CD8-positive, alpha-beta T cell (primary cell): ENCODE measurements at regions of chr6 and their contacts with region 1.

Region 1: GRCh38 chr6:41027799-41028628 is 11.0 kb downstream of the UNC5CL start:
- DNase-seq: peak; percentile 39 to 87 (median 73)
- ATAC-seq: peak; percentile 87
- H3K4me3 ChIP-seq: peak overlapping the region; percentile 65 to 67
- H3K4me3 Mint-ChIP-seq: peak overlapping the region; percentile 84
- H3K27ac ChIP-seq: peak overlapping the region; percentile 35 to 76
- H3K27ac Mint-ChIP-seq: peak overlapping the region; percentile 74
- H3K4me1 ChIP-seq: peaks cover 19% of the 10 kb centered on the region
- H3K4me1 Mint-ChIP-seq: peaks cover 21% of the 10 kb centered on the region
- H3K27me3 ChIP-seq: no peaks in the 10 kb centered on the region
- H3K27me3 Mint-ChIP-seq: no peaks in the 10 kb centered on the region
- CTCF ChIP-seq: peak; percentile 99

Region 2: DNA sequence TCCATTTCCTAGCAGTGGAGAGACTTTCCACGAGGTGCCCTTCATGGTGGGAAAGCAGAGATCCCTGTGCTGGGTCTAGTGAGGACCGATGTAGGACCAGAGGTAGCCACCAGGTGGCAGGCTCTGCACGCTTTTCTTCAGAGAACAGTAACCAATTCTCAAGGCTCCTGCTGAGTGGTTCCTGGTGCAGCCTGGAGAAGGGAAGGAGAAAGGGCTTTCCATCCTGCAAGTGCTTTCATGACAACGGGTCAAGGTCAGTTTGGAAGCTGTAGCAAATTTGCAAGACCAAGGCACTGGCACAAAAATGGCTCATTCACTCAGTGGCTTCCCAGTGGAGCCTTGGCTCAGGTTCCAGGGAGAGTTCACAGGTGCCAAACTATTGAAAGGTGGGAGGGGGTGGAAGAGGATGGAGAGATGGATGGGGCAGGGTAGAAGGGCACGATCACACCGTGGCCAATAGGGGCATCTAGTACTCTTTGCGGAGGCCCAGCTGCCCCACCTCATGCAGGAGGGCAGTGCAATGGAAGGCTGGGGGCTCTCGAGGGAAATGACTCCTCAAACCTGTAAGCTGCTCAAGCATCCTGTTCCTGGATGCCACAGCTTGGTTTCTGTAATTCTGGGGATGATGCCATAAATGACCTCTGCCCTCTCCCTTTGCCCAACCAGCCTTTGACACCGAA is 1680.0 kb before region 1 on chr6:
- CTCF ChIA-PET with region 1: interaction called, 3 read pairs
- POLR2A ChIA-PET with region 1: no interaction called
- intact Hi-C with region 1: loop called in 1 of 2 experiments (anchors 5 kb)
- DNase-seq: peak in 8 of 9 experiments; percentile 5 to 66 (median 48)
- ATAC-seq: peak; percentile 48
- H3K4me3 ChIP-seq: no peak overlapping the region
- H3K4me3 Mint-ChIP-seq: no peak overlapping the region
- H3K27ac ChIP-seq: no peak overlapping the region
- H3K27ac Mint-ChIP-seq: no peak overlapping the region
- H3K4me1 ChIP-seq: no peaks in the 10 kb centered on the region
- H3K4me1 Mint-ChIP-seq: no peaks in the 10 kb centered on the region
- H3K27me3 ChIP-seq: no peaks in the 10 kb centered on the region
- H3K27me3 Mint-ChIP-seq: peaks cover 4% of the 10 kb centered on the region
- CTCF ChIP-seq: peak; percentile 75

Region 3: DNA sequence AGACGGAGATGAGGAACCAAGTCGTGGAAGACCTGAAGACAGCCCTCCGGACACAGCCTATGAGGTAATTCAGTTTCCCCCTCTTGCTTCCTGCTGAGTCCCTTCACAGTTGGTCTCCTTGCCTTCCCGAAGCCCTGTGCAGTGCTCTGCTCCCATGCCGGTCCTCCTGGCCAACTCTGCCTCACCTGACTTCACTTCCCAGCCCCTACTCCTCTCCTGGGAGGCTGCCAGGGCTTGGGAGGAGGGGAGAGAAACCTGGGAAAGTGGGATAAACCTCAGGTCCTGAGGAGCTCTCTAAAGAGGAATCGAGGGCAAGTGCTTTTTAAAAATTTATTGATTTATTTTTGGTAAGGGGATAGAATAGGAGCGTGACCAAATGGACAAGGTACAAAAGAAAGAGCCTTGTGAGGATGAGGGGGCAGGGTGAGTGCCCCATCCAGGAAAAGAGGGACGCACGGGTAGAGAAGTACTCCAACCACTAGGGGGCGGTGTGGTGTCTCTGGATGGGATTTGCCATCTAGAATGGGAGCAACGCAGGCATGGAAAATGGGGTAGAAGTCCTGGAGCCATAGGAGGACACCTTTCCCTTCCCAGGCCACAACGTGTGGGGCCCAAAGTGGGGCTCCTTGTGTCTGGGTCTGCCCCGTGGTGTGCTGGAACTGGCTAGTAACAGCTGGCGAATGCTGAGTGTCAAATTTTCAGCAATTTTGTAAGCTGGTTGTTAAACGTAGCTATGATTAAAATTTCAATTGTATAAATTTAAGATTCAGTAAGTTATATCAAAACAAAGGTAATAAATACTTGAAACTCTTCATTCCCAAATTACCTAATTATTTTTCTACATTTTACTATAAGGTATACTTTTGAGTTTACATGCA is 1162.8 kb before region 1 on chr6:
- CTCF ChIA-PET with region 1: no interaction called
- POLR2A ChIA-PET with region 1: no interaction called
- intact Hi-C with region 1: loop called in 1 of 2 experiments (anchors 5 kb)
- DNase-seq: peak in 8 of 9 experiments; percentile 32 to 68 (median 52)
- ATAC-seq: no peak
- H3K4me3 ChIP-seq: no peak overlapping the region
- H3K4me3 Mint-ChIP-seq: no peak overlapping the region
- H3K27ac ChIP-seq: no peak overlapping the region
- H3K27ac Mint-ChIP-seq: no peak overlapping the region
- H3K4me1 ChIP-seq: no peaks in the 10 kb centered on the region
- H3K4me1 Mint-ChIP-seq: no peaks in the 10 kb centered on the region
- H3K27me3 ChIP-seq: no peaks in the 10 kb centered on the region
- H3K27me3 Mint-ChIP-seq: peaks cover 15% of the 10 kb centered on the region
- CTCF ChIP-seq: peak; percentile 74

Region 4: GRCh38 chr6:40999569-40999968 is 28.4 kb before region 1 on chr6:
- CTCF ChIA-PET with region 1: interaction called, 17 read pairs
- POLR2A ChIA-PET with region 1: interaction called, 3 read pairs
- intact Hi-C with region 1: no loop called
- DNase-seq: peak in 2 of 9 experiments; percentile 25 to 44
- ATAC-seq: no peak
- H3K4me3 ChIP-seq: no peak overlapping the region
- H3K4me3 Mint-ChIP-seq: no peak overlapping the region
- H3K27ac ChIP-seq: no peak overlapping the region
- H3K27ac Mint-ChIP-seq: no peak overlapping the region
- H3K4me1 ChIP-seq: no peaks in the 10 kb centered on the region
- H3K4me1 Mint-ChIP-seq: no peaks in the 10 kb centered on the region
- H3K27me3 ChIP-seq: no peaks in the 10 kb centered on the region
- H3K27me3 Mint-ChIP-seq: peaks cover 21% of the 10 kb centered on the region
- CTCF ChIP-seq: no peak

Region 5: DNA sequence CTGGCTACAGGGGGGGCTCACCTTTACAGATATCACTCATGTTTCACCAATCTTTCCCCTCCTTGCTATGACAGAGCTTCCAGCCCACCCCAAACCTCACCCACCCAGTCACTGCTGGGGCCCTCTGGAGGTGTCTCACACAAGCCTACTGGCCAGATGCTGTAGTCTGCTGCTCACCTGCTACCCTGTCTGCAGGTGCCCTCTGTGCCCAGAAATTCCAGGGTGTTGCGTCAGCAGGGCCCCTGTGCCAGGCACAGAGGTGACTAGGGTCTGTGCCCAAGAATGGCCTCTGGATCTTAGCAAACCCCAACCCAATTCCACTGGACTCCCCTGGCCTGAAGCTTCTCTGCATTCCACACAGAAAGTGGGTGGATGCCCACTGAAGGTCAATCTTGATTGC is 10.4 kb before region 1 on chr6:
- CTCF ChIA-PET with region 1: interaction called, 18 read pairs
- POLR2A ChIA-PET with region 1: interaction called, 3 read pairs
- intact Hi-C with region 1: no loop called
- DNase-seq: no peak
- ATAC-seq: no peak
- H3K4me3 ChIP-seq: no peak overlapping the region
- H3K4me3 Mint-ChIP-seq: no peak overlapping the region
- H3K27ac ChIP-seq: no peak overlapping the region
- H3K27ac Mint-ChIP-seq: no peak overlapping the region
- H3K4me1 ChIP-seq: no peaks in the 10 kb centered on the region
- H3K4me1 Mint-ChIP-seq: no peaks in the 10 kb centered on the region
- H3K27me3 ChIP-seq: no peaks in the 10 kb centered on the region
- H3K27me3 Mint-ChIP-seq: peaks cover 2% of the 10 kb centered on the region
- CTCF ChIP-seq: no peak

Region 6: DNA sequence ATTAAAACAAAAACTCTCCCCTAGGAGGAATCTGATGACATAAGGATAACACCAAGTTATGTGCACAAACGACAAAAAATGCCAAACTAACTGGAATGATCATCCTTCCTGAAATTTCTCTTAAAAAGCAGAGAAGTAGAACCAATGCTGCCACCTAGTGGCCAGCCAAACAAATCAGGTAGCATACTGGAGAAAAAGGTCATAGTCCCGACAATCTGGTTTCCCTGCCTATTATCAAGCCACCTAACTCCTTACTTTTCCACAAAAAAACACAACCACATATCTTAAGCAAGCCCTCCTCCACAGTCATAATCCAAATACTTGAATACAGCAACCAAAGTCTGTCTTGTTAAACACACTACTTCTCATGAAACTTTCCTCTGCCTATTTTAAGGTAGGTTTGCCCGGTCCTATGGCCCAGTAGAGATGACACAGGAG is 38.9 kb after region 1 on chr6:
- CTCF ChIA-PET with region 1: interaction called, 11 read pairs
- POLR2A ChIA-PET with region 1: interaction called, 11 read pairs
- intact Hi-C with region 1: loop called (anchors 1 to 2 kb)
- DNase-seq: peak in 8 of 9 experiments; percentile 42 to 83 (median 70)
- ATAC-seq: no peak
- H3K4me3 ChIP-seq: no peak overlapping the region
- H3K4me3 Mint-ChIP-seq: no peak overlapping the region
- H3K27ac ChIP-seq: no peak overlapping the region
- H3K27ac Mint-ChIP-seq: no peak overlapping the region
- H3K4me1 ChIP-seq: peaks cover 8% of the 10 kb centered on the region
- H3K4me1 Mint-ChIP-seq: peaks cover 24% of the 10 kb centered on the region
- H3K27me3 ChIP-seq: no peaks in the 10 kb centered on the region
- H3K27me3 Mint-ChIP-seq: no peaks in the 10 kb centered on the region
- CTCF ChIP-seq: peak; percentile 94

Region 7: DNA sequence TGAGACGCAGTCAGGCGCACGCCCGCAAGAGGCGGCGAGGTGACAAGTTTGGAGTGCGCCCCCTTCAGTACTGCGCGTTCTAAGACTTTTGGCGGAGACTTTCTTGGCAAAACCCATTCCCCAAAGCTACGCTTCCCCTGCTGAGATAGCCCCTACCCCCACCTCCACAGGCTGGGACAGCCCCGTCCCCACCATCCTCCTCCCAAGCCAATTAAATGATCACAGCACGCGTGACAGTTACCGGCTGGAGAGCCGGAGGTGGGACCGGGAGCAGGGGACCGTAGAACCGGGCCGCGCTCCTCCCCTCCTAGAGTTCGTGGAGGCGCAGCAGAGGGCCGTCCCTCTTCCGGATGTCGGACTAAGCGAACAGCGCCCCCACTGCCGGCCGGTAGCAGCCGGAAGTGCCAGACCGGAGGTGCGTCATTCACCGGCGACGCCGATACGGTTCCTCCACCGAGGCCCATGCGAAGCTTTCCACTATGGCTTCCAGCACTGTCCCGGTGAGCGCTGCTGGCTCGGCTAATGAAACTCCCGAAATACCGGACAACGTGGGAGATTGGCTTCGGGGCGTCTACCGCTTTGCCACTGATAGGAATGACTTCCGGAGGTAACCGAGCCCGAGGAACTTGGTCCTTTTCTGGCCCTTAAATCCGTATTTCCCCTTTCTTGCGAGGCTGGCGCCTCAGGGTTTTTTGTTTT is 759.4 kb after region 1 on chr6 and contains the start of gene TOMM6:
- CTCF ChIA-PET with region 1: no interaction called
- POLR2A ChIA-PET with region 1: no interaction called
- intact Hi-C with region 1: no loop called
- DNase-seq: peak; percentile 90 to 97 (median 96)
- ATAC-seq: peak; percentile 78
- H3K4me3 ChIP-seq: peak within 1 kb of the TSS; percentile 80 to 96
- H3K4me3 Mint-ChIP-seq: peak within 1 kb of the TSS; percentile 97
- H3K27ac ChIP-seq: peak within 1 kb of the TSS; percentile 89 to 94
- H3K27ac Mint-ChIP-seq: peak within 1 kb of the TSS; percentile 99
- H3K4me1 ChIP-seq: peaks cover 6% of the 10 kb centered on the region
- H3K4me1 Mint-ChIP-seq: peaks cover 15% of the 10 kb centered on the region
- H3K27me3 ChIP-seq: no peaks in the 10 kb centered on the region
- H3K27me3 Mint-ChIP-seq: no peaks in the 10 kb centered on the region
- CTCF ChIP-seq: peak; percentile 78
- total RNA-seq, gene TOMM6: 94.3 to 101 TPM